PC-3 (cell line): ENCODE measurements at regions of chr3 and their contacts with region 1.

Region 1: GRCh38 chr3:107690522-107691138 is 167.9 kb downstream of the BBX start:
- DNase-seq: peak; percentile 84
- ATAC-seq: peak; percentile 77
- H3K4me3 ChIP-seq: no peak overlapping the region
- H3K27ac ChIP-seq: no peak overlapping the region
- H3K4me1 ChIP-seq: no peaks in the 10 kb centered on the region
- H3K27me3 ChIP-seq: no peaks in the 10 kb centered on the region
- CTCF ChIP-seq: peak; percentile 72

Region 2: GRCh38 chr3:107488942-107489341 is 201.7 kb before region 1 on chr3:
- CTCF ChIA-PET with region 1: no interaction called
- POLR2A ChIA-PET with region 1: no interaction called
- intact Hi-C with region 1: no loop called
- DNase-seq: no peak
- ATAC-seq: no peak
- H3K4me3 ChIP-seq: no peak overlapping the region
- H3K27ac ChIP-seq: no peak overlapping the region
- H3K4me1 ChIP-seq: no peaks in the 10 kb centered on the region
- H3K27me3 ChIP-seq: no peaks in the 10 kb centered on the region
- CTCF ChIP-seq: no peak

Region 3: DNA sequence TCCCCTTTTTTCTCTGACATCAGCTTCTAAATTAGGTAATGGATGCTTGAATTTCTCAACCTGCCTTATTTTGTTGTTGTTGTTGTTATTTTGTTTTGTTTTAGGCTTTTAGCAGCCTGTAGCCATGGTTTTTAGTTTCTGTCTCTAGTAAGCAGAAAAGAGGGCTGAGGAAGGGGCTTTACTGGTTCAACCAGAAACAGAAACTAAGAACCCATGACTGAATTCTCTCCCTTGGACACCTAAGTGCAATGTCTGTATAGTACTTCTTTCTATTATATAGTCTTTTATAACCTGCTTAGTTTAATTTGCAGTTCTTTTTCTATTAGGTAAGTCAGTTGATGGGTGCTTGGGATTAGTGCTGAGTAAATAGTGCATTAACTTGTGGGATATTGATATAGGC is 38.8 kb before region 1 on chr3:
- CTCF ChIA-PET with region 1: no interaction called
- POLR2A ChIA-PET with region 1: no interaction called
- intact Hi-C with region 1: no loop called
- DNase-seq: no peak
- ATAC-seq: no peak
- H3K4me3 ChIP-seq: no peak overlapping the region
- H3K27ac ChIP-seq: no peak overlapping the region
- H3K4me1 ChIP-seq: peaks cover 9% of the 10 kb centered on the region
- H3K27me3 ChIP-seq: no peaks in the 10 kb centered on the region
- CTCF ChIP-seq: no peak

Region 4: DNA sequence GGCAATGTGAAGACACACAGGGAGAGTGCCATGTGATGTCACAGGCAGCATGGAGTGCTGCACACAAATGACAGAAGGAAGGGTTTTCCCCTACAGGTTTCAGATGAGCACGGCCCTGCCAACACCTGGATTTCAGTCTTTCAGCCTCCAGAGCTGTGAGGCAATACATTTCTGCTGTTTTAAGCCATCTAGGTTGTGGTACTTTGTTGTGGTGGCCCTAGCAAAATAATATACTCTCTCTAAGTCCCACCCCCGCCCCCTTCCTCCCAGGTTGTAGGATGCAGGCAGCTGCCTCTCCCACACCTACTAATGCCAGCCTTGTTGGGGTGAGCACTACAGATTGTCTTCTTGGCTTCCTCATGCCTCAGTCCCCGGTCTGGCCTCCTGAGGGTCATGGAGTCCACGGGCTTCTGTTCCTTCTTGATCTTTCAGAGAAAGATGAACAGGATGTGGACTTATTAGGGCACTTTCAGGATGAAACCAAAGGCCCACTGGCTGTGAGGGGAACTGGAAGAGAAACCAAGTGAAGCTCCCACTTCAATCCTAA is 220.2 kb after region 1 on chr3:
- CTCF ChIA-PET with region 1: no interaction called
- POLR2A ChIA-PET with region 1: no interaction called
- intact Hi-C with region 1: no loop called
- DNase-seq: no peak
- ATAC-seq: no peak
- H3K4me3 ChIP-seq: no peak overlapping the region
- H3K27ac ChIP-seq: no peak overlapping the region
- H3K4me1 ChIP-seq: peaks cover 4% of the 10 kb centered on the region; the same call in 1 of the 2 replicates
- H3K27me3 ChIP-seq: no peaks in the 10 kb centered on the region
- CTCF ChIP-seq: no peak

Region 5: DNA sequence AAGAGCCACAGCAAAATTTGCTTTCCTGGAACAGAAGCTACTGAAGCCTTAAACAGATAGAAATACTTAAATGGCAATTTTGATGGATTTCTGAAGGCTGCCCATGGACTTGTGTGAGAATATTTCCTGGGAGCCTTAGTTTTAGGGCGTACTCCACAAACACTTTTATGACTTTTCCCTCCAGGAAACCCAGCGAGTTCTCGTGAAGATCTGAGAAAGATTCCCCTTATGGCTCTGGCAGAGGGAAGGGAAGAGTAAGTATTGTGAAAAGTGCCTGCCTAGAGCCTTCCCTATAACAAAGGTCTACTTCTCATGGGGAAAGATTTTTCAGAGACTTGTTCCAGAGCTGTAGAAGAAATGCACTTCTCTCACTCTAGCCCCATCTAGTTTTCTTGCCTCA is 1100.8 kb after region 1 on chr3:
- CTCF ChIA-PET with region 1: interaction called, 24 read pairs
- POLR2A ChIA-PET with region 1: no interaction called
- intact Hi-C with region 1: no loop called
- DNase-seq: no peak
- ATAC-seq: no peak
- H3K4me3 ChIP-seq: no peak overlapping the region
- H3K27ac ChIP-seq: no peak overlapping the region
- H3K4me1 ChIP-seq: no peaks in the 10 kb centered on the region
- H3K27me3 ChIP-seq: peaks cover 30% of the 10 kb centered on the region
- CTCF ChIP-seq: no peak